PC-3 (cell line): ENCODE measurements at regions of chr1 and their contacts with region 1.

Region 1: GRCh38 chr1:184973272-184974055 is 844 bp downstream of the NIBAN1 start:
- DNase-seq: peak; percentile 28
- ATAC-seq: peak; percentile 58
- H3K4me3 ChIP-seq: peak overlapping the region; percentile 94
- H3K27ac ChIP-seq: no peak overlapping the region
- H3K4me1 ChIP-seq: peaks cover 10% of the 10 kb centered on the region
- H3K27me3 ChIP-seq: no peaks in the 10 kb centered on the region
- CTCF ChIP-seq: no peak

Region 2: GRCh38 chr1:184827600-184828368 is 145.7 kb before region 1 on chr1:
- CTCF ChIA-PET with region 1: no interaction called
- POLR2A ChIA-PET with region 1: no interaction called
- intact Hi-C with region 1: no loop called
- DNase-seq: peak; percentile 58
- ATAC-seq: peak; percentile 48; the same call in 1 of the 2 replicates
- H3K4me3 ChIP-seq: no peak overlapping the region
- H3K27ac ChIP-seq: no peak overlapping the region
- H3K4me1 ChIP-seq: peaks cover 10% of the 10 kb centered on the region
- H3K27me3 ChIP-seq: no peaks in the 10 kb centered on the region
- CTCF ChIP-seq: no peak

Region 3: DNA sequence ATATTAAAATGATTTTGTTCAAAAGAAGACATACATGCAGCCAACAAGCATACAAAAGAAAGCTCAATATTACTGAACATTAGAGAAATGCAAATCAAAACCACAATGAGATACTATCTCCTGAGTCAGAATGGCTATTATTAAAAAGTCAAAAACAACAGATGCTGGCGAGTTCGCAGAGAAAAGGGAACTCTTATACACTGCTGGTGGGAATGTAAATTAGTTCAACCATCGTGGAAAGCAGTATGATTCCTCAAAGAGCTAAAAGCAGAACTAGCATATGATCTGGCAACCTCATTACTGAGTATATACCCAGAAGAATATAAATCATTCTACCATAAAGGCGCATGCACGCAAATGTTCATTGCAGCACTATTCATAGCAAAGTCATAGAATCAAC is 634.7 kb after region 1 on chr1:
- CTCF ChIA-PET with region 1: no interaction called
- POLR2A ChIA-PET with region 1: interaction called, 42 read pairs
- intact Hi-C with region 1: no loop called
- DNase-seq: no peak
- ATAC-seq: no peak
- H3K4me3 ChIP-seq: no peak overlapping the region
- H3K27ac ChIP-seq: no peak overlapping the region
- H3K4me1 ChIP-seq: no peaks in the 10 kb centered on the region
- H3K27me3 ChIP-seq: no peaks in the 10 kb centered on the region
- CTCF ChIP-seq: no peak